ENCODE measurements at regions of chr10 and their contacts with region 1.

Region 1: GRCh38 chr10:128211953-128212727 is 85.9 kb upstream of the MKI67 start:
- DNase-seq: peak; percentile 71 to 95
- H3K4me3 ChIP-seq: peak overlapping the region in 1 of 4 experiments; percentile 15; a peak in 1 of 8 replicates
- H3K27ac ChIP-seq: no peak overlapping the region
- H3K4me1 ChIP-seq: peaks cover 0 to 7% (median 5%) of the 10 kb centered on the region in 4 experiments; a peak in 4 of 7 replicates
- H3K27me3 ChIP-seq: peaks cover 0 to 12% (median 9%) of the 10 kb centered on the region in 4 experiments; a peak in 6 of 7 replicates
- CTCF ChIP-seq: peak; percentile 76 to 90 (median 90)
- EP300 ChIP-seq: 0 out of 3 replicates have a peak, but pooled peaks of 1 of the 2 experiments have one; percentile 44
- POLR2A ChIP-seq: no peak
- RAD21 ChIP-seq: peak; percentile 51 to 67

Region 2: DNA sequence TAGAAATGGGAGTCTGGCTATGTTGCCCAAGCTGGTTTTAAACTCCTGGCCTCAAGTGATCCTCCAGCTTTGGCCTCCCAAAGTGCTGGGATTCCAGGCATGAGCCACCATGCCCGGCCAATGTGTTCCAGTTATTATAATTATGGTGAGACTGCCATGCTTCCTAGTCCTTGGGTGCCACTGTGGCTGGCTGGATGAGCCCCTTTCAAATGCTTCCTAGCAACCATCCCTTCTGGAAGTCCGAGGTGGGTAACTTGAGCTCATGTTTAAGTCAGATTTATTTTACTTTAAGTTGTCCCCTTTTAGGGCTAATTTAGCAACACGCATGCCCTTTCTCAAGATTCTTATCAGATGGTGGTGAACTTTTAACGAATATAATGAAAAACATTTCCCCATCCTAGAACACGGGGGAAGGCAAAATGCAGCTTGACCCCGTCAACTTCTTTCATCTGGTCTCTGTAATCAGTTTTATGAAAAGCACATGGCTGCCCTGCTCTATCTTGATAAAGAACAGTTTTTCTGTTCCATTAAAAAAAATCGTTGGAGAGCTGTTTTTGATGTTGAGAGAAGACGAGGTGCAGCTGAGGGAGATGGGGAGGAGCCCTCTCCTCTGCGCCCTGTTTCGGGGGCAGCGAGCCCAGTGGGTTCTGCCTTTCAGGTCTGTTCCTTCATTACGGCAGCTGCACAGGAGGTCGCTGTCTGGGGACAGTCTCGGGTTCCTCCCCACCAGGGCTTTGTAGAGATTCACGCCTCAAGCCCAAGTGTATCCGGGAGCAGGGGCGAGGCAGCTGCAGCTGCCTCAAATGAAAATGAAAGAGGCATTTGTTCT is 25.0 kb before region 1 on chr10:
- CTCF ChIA-PET with region 1: interaction called, 12 read pairs
- POLR2A ChIA-PET with region 1: interaction called, 3 read pairs
- DNase-seq: no peak
- H3K4me3 ChIP-seq: no peak overlapping the region
- H3K27ac ChIP-seq: no peak overlapping the region
- H3K4me1 ChIP-seq: peaks cover 0 to 6% (median 3%) of the 10 kb centered on the region in 4 experiments; a peak in 4 of 7 replicates
- H3K27me3 ChIP-seq: no peaks in the 10 kb centered on the region; a peak in 1 of 7 replicates
- CTCF ChIP-seq: no peak
- EP300 ChIP-seq: no peak
- POLR2A ChIP-seq: no peak
- RAD21 ChIP-seq: no peak